ENCODE measurements at regions of chr7 and their contacts with region 1.

Region 1: GRCh38 chr7:93231799-93232672 is at the start of gene VPS50:
- DNase-seq: peak; percentile 93
- ATAC-seq: peak; percentile 100
- H3K4me3 ChIP-seq: peak within 1 kb of the TSS; percentile 80
- H3K27ac ChIP-seq: peak within 1 kb of the TSS; percentile 64
- H3K4me1 ChIP-seq: no peaks in the 10 kb centered on the region
- H3K27me3 ChIP-seq: peaks cover under 1% of the 10 kb centered on the region; the same call in 1 of the 2 replicates
- CTCF ChIP-seq: no peak
- POLR2A ChIP-seq: no peak
- RAD21 ChIP-seq: no peak
- total RNA-seq, gene VPS50: 22.0 and 26.7 TPM in 2 replicates

Region 2: GRCh38 chr7:92496876-92497275 is 735.2 kb before region 1 on chr7:
- CTCF ChIA-PET with region 1: no interaction called
- POLR2A ChIA-PET with region 1: no interaction called
- dilution Hi-C with region 1: no loop called
- in situ Hi-C with region 1: no loop called
- intact Hi-C with region 1: no loop called
- DNase-seq: peak; percentile 62
- ATAC-seq: peak; percentile 73
- H3K4me3 ChIP-seq: no peak overlapping the region
- H3K27ac ChIP-seq: no peak overlapping the region
- H3K4me1 ChIP-seq: no peaks in the 10 kb centered on the region
- H3K27me3 ChIP-seq: no peaks in the 10 kb centered on the region
- CTCF ChIP-seq: no peak
- POLR2A ChIP-seq: no peak
- RAD21 ChIP-seq: no peak

Region 3: DNA sequence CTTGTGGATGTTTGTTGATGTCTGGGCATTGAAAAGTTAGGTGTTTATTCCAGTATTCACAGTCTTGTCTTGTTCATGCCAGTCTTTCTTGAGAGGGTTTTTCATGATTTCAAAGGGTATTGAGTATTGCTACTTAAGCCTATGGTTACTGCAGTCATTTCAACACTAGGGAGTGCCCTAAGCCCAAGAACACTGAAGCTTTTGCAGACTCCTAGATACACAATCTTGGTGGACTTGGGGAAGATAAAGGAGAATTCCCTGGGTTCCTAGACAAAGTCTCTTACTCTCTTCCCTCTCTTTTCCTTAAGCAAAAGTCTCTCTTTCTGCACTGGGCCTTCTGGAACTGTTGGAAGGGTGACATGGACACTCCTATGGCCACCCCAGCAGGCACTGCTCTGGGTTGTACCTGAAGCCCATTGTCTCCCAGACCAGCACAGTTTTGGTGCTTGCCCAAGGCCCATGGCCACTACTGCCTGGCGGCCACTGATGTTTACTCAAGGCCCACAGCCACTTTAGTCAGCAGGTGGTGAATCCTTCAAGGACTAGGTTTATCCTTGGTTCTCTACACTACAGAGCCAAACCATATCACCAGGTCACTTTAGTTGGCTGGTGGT is 139.2 kb before region 1 on chr7:
- CTCF ChIA-PET with region 1: interaction called, 9 read pairs
- POLR2A ChIA-PET with region 1: no interaction called
- dilution Hi-C with region 1: no loop called
- in situ Hi-C with region 1: no loop called
- intact Hi-C with region 1: loop called (anchors 1 kb)
- DNase-seq: peak; percentile 71
- ATAC-seq: peak; percentile 86
- H3K4me3 ChIP-seq: no peak overlapping the region
- H3K27ac ChIP-seq: no peak overlapping the region
- H3K4me1 ChIP-seq: no peaks in the 10 kb centered on the region
- H3K27me3 ChIP-seq: peaks cover 9% of the 10 kb centered on the region
- CTCF ChIP-seq: peak; percentile 67
- POLR2A ChIP-seq: no peak
- RAD21 ChIP-seq: peak; percentile 80

Region 4: GRCh38 chr7:93178212-93178611 is 53.8 kb before region 1 on chr7:
- CTCF ChIA-PET with region 1: interaction called, 3 read pairs
- POLR2A ChIA-PET with region 1: no interaction called
- dilution Hi-C with region 1: no loop called
- in situ Hi-C with region 1: no loop called
- intact Hi-C with region 1: loop called (anchors 5 kb)
- DNase-seq: peak; percentile 23
- ATAC-seq: peak; percentile 37; the same call in 1 of the 2 replicates
- H3K4me3 ChIP-seq: no peak overlapping the region
- H3K27ac ChIP-seq: no peak overlapping the region
- H3K4me1 ChIP-seq: no peaks in the 10 kb centered on the region
- H3K27me3 ChIP-seq: peaks cover 17% of the 10 kb centered on the region
- CTCF ChIP-seq: peak; percentile 41
- POLR2A ChIP-seq: no peak
- RAD21 ChIP-seq: peak; percentile 49

Measured in IMR-90 (cell line).